Cardiac septum (tissue), 1 donor: ENCODE measurements at regions of chr3 and their contacts with region 1.

Region 1: GRCh38 chr3:169744366-169745054 is 20.4 kb downstream of the TERC start:
- DNase-seq: no peak

Region 2: GRCh38 chr3:168952551-168952950 is 792.0 kb before region 1 on chr3:
- intact Hi-C with region 1: loop called (anchors 10 kb)
- DNase-seq: no peak

Region 3: DNA sequence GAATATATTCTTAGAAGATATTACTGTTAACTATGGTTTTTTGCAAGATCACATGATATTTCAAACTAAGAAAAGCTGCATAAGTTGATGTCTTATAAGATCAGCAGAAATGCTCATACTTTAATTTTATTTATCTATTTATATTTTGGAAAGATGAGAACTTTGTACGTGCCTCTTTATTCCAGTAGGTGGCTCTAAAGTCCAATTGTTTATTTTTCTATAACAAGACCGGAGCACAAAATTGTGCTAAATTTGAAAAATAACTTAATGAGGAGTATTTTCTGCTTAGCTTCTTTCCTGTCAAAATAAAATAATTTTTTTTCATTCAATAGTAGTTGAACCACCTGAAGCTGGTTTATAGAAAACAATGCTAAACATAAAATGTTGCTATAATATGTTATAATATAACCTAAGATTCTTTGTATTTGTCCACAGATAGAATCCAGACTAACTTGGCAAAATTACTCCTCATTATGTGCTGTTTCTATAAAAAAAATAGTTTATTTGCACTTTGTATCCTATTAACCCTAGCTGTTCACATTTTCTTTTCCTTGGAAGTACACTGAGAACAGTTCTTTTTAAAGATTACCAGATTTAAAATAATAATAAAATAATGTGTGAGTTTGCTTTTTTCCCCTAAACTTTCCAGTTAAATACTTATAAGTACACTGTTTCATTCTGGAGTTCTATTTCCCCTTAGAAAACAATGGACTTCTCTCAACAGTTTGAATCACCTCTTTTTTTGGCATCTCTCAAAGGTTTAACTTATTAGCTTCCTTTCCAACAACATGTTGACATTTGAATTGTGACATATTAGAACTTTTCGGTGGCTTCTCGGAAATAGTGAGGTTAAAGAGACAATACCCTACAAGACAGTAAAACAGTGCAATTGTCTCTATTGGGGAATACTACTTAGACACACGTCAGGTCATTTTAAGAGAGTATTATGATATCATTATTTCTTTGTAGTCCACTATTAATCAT is 611.0 kb before region 1 on chr3:
- intact Hi-C with region 1: loop called (anchors 5 kb)
- DNase-seq: no peak

Region 4: GRCh38 chr3:169836078-169836941 is 91.8 kb after region 1 on chr3:
- intact Hi-C with region 1: no loop called
- DNase-seq: no peak

Region 5: GRCh38 chr3:169847896-169848295 is 103.4 kb after region 1 on chr3:
- intact Hi-C with region 1: no loop called
- DNase-seq: no peak